Esophagus muscularis mucosa (tissue), 4 donors: ENCODE measurements at regions of chr11 and their contacts with region 1.

Region 1: DNA sequence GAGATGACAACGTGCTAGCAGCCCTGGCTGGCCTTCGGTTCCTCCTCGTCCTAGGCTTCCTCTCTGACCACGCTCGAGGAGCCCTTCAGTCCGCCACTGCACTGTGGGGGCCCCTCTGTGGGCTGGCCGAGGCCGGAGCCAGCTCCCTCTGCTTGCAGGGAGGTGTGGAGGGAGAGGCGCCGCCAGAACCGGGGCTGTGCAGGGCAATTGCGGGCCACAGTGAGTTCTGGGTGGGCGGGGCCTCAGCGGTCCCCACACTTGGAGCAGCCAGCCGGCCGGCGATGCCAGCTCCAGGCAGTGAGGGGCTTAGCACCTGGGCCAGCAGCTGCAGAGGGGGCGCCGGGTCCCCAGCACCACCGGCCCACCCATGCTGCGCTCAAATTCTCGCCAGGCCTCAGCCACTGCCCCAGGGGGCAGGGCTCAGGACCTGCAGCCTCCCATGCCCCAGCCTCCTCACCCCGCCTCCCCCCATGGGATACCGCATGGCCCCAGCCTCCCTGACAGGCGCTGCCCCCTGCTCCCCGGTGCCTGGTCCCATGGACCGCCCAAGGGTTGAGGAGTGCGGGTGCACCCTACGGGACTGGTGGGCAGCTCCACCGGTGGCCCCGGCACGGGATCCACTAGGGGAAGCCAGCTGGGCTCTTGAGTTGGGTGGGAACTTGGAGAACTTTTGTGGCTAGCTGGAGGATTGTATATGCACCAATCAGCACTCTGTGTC is 399.4 kb downstream of the LUZP2 start:
- DNase-seq: no peak
- H3K4me3 ChIP-seq: no peak overlapping the region
- H3K27ac ChIP-seq: no peak overlapping the region
- H3K4me1 ChIP-seq: no peaks in the 10 kb centered on the region
- H3K27me3 ChIP-seq: no peaks in the 10 kb centered on the region
- CTCF ChIP-seq: no peak
- EP300 ChIP-seq: no peak
- POLR2A ChIP-seq: no peak

Region 2: GRCh38 chr11:26199331-26200095 is 1303.2 kb after region 1 on chr11:
- intact Hi-C with region 1: loop called (anchors 10 kb)
- DNase-seq: no peak
- H3K4me3 ChIP-seq: no peak overlapping the region
- H3K27ac ChIP-seq: no peak overlapping the region
- H3K4me1 ChIP-seq: no peaks in the 10 kb centered on the region
- H3K27me3 ChIP-seq: no peaks in the 10 kb centered on the region
- CTCF ChIP-seq: no peak
- EP300 ChIP-seq: no peak
- POLR2A ChIP-seq: no peak